Caco-2 (cell line): ENCODE measurements at regions of chr7 and their contacts with region 1.

Region 1: DNA sequence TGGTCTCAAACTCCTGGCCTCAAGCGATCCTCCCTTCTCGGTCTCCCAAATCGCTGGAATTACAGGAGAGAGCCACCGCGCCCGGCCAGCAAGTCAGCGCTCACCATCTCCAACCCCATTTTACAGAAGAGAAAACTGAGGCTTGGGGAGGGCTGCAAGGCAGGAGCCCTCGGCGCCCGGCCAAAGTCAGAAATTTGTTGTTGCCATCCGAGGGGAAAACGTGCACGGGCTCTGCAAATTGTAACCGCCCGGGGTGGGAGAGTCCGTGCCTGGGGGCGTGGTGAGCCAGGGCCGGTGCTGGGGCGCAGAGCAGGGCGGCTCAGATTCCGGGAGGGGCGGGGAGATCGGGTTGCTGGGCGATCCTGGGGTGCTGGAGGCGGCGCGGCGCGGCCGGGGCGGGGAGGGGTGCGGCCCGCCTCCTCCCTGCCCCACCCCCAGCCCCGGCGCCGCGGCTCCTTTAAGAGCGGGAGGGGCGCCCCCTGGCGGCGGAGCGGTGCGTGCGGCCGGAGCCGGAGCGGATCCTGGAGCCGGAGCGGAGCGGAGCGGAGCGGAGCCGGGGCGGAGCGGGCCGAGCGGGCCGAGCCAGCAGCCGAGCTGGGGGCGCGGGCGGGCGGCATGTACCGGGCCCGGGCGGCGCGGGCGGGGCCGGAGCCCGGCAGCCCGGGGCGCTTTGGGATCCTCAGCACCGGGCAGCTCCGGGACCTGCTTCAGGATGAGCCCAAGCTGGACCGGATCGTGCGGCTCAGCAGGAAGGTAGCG is at the start of gene VPS37D:
- DNase-seq: peak; percentile 92 to 97
- H3K4me3 ChIP-seq: peak within 1 kb of the TSS; percentile 53
- H3K4me3 Mint-ChIP-seq: peak within 1 kb of the TSS; percentile 70
- H3K27ac Mint-ChIP-seq: no peak within 1 kb of the TSS
- H3K4me1 ChIP-seq: peaks cover 14% of the 10 kb centered on the region
- H3K4me1 Mint-ChIP-seq: peaks cover 4% of the 10 kb centered on the region
- H3K27me3 ChIP-seq: no peaks in the 10 kb centered on the region
- H3K27me3 Mint-ChIP-seq: no peaks in the 10 kb centered on the region
- CTCF ChIP-seq: peak; percentile 85 to 94
- total RNA-seq, gene VPS37D: 1.9 and 2.7 TPM in 2 replicates

Region 2: DNA sequence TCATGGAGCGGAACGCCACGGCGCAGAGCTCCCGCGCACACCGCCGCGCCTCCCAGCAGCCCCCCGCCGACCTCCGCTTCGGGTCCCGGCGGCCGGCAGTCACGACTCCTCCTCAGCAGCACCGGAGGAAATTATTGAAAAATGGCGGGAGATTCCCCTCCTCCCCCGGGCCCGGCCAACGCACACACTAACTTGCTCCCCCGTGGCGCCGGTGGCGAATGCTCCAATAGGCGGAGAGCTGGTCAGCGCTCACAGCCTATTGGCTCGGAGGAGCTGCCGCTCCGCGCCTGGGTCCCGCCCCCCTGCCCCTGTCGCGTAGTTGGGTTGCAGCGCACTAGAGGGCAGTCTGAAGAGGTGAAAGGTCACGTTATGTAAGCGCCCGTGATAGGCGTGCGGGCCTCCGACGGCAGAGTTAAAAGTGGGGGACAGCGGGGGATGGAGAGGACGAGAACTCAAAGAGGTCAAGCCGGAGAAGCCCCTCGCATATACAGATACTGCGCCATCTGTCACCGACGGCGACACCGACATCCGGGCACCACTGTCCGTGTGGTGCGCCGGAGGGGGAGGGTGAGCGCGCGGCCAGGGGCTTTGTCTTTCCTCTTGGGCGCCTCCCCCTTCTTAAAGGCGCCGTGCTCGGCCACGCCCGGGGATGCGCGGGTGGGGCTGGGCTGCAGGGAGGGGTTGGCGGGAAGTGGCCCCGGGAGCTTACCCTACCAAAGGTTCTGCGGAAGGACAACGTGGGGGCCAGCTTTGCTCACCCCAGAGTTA is 145.2 kb before region 1 on chr7 and contains the start of gene BAZ1B:
- CTCF ChIA-PET with region 1: no interaction called
- POLR2A ChIA-PET with region 1: no interaction called
- intact Hi-C with region 1: loop called (anchors 5 kb)
- DNase-seq: peak; percentile 99
- H3K4me3 ChIP-seq: peak within 1 kb of the TSS; percentile 77
- H3K4me3 Mint-ChIP-seq: peak within 1 kb of the TSS; percentile 93
- H3K27ac Mint-ChIP-seq: peak within 1 kb of the TSS; percentile 98
- H3K4me1 ChIP-seq: peaks cover 18% of the 10 kb centered on the region
- H3K4me1 Mint-ChIP-seq: peaks cover 18% of the 10 kb centered on the region
- H3K27me3 ChIP-seq: no peaks in the 10 kb centered on the region
- H3K27me3 Mint-ChIP-seq: no peaks in the 10 kb centered on the region
- CTCF ChIP-seq: peak in 1 of 2 experiments; percentile 21
- total RNA-seq, gene BAZ1B: 85.2 and 85.7 TPM in 2 replicates

Region 3: GRCh38 chr7:73606801-73607691 is 60.5 kb before region 1 on chr7:
- CTCF ChIA-PET with region 1: interaction called, 8 read pairs
- POLR2A ChIA-PET with region 1: no interaction called
- intact Hi-C with region 1: loop called (anchors 1 kb)
- DNase-seq: peak; percentile 63 to 77
- H3K4me3 ChIP-seq: no peak overlapping the region
- H3K4me3 Mint-ChIP-seq: no peak overlapping the region
- H3K27ac Mint-ChIP-seq: no peak overlapping the region
- H3K4me1 ChIP-seq: peaks cover 5% of the 10 kb centered on the region; the same call in 1 of the 2 replicates
- H3K4me1 Mint-ChIP-seq: peaks cover 7% of the 10 kb centered on the region
- H3K27me3 ChIP-seq: no peaks in the 10 kb centered on the region
- H3K27me3 Mint-ChIP-seq: no peaks in the 10 kb centered on the region
- CTCF ChIP-seq: peak; percentile 93 to 94

Region 4: GRCh38 chr7:73612598-73613269 is 54.8 kb before region 1 on chr7:
- CTCF ChIA-PET with region 1: interaction called, 7 read pairs
- POLR2A ChIA-PET with region 1: no interaction called
- intact Hi-C with region 1: loop called (anchors 1 kb)
- DNase-seq: peak; percentile 83 to 90
- H3K4me3 ChIP-seq: no peak overlapping the region
- H3K4me3 Mint-ChIP-seq: peak overlapping the region; percentile 52
- H3K27ac Mint-ChIP-seq: peak overlapping the region; percentile 48
- H3K4me1 ChIP-seq: peaks cover 26% of the 10 kb centered on the region
- H3K4me1 Mint-ChIP-seq: peaks cover 15% of the 10 kb centered on the region
- H3K27me3 ChIP-seq: no peaks in the 10 kb centered on the region
- H3K27me3 Mint-ChIP-seq: no peaks in the 10 kb centered on the region
- CTCF ChIP-seq: peak in 1 of 2 experiments; percentile 43

Region 5: GRCh38 chr7:73726083-73726466 is 58.6 kb after region 1 on chr7:
- CTCF ChIA-PET with region 1: interaction called, 7 read pairs
- POLR2A ChIA-PET with region 1: no interaction called
- intact Hi-C with region 1: loop called (anchors 2 kb)
- DNase-seq: no peak
- H3K4me3 ChIP-seq: no peak overlapping the region
- H3K4me3 Mint-ChIP-seq: no peak overlapping the region
- H3K27ac Mint-ChIP-seq: no peak overlapping the region
- H3K4me1 ChIP-seq: no peaks in the 10 kb centered on the region
- H3K4me1 Mint-ChIP-seq: no peaks in the 10 kb centered on the region
- H3K27me3 ChIP-seq: no peaks in the 10 kb centered on the region
- H3K27me3 Mint-ChIP-seq: no peaks in the 10 kb centered on the region
- CTCF ChIP-seq: no peak